ENCODE measurements at regions of chr1 and their contacts with region 1.

Region 1: DNA sequence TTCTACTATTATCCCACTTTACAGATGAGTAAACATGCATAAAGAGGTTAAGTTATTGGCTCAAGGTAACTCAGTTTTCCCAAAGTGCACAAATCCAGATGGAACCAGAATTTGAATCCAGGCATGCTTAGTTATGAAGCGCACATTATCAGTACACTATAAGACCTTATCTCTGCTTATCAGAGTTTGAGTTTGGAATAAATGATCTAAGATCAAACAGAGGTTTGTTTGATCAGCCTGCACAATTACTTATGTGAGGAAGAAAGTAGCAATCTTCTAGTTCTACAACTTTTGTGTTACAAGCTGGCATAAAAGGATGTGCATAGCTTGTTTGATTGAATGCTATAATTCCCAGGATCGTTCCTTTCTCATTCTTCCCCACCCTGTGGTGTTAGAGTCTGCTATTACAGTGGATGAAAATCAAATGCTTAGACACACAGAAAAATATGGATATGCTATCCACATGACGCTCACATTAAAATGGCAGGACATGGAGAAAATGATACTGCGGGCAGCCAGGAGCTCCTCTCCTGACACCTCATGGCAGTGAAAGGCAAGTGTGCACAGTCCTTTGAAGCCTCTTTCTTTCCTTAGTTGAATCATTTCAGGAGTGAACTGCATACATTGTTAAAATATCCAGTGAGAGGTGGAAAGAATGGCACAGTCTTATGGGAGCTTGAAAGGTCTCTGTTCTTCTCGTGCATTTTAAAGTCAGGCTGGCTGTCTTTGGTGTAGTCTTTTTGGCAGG is 23.9 kb upstream of the PBX1 start:
- DNase-seq: peak in 1 of 2 experiments; percentile 7
- H3K4me3 ChIP-seq: no peak overlapping the region
- H3K4me3 Mint-ChIP-seq: no peak overlapping the region
- H3K27ac Mint-ChIP-seq: no peak overlapping the region
- H3K4me1 ChIP-seq: peaks cover 35% of the 10 kb centered on the region
- H3K4me1 Mint-ChIP-seq: peaks cover 14% of the 10 kb centered on the region
- H3K27me3 ChIP-seq: no peaks in the 10 kb centered on the region
- H3K27me3 Mint-ChIP-seq: no peaks in the 10 kb centered on the region
- CTCF ChIP-seq: peak in 1 of 2 experiments; percentile 10

Region 2: GRCh38 chr1:164480285-164480907 is 54.6 kb before region 1 on chr1:
- CTCF ChIA-PET with region 1: no interaction called
- POLR2A ChIA-PET with region 1: no interaction called
- intact Hi-C with region 1: loop called (anchors 5 kb)
- DNase-seq: no peak
- H3K4me3 ChIP-seq: no peak overlapping the region
- H3K4me3 Mint-ChIP-seq: no peak overlapping the region
- H3K27ac Mint-ChIP-seq: no peak overlapping the region
- H3K4me1 ChIP-seq: no peaks in the 10 kb centered on the region
- H3K4me1 Mint-ChIP-seq: no peaks in the 10 kb centered on the region
- H3K27me3 ChIP-seq: no peaks in the 10 kb centered on the region
- H3K27me3 Mint-ChIP-seq: no peaks in the 10 kb centered on the region
- CTCF ChIP-seq: no peak

Region 3: GRCh38 chr1:164518692-164519332 is 16.2 kb before region 1 on chr1:
- CTCF ChIA-PET with region 1: no interaction called
- POLR2A ChIA-PET with region 1: no interaction called
- intact Hi-C with region 1: loop called (anchors 1 kb)
- DNase-seq: peak in 1 of 2 experiments; percentile 13
- H3K4me3 ChIP-seq: no peak overlapping the region
- H3K4me3 Mint-ChIP-seq: no peak overlapping the region
- H3K27ac Mint-ChIP-seq: no peak overlapping the region
- H3K4me1 ChIP-seq: no peaks in the 10 kb centered on the region
- H3K4me1 Mint-ChIP-seq: no peaks in the 10 kb centered on the region
- H3K27me3 ChIP-seq: no peaks in the 10 kb centered on the region
- H3K27me3 Mint-ChIP-seq: no peaks in the 10 kb centered on the region
- CTCF ChIP-seq: peak in 1 of 2 experiments; percentile 21

Region 4: GRCh38 chr1:164558461-164559341 is 23.7 kb after region 1 on chr1 and contains the start of gene PBX1:
- CTCF ChIA-PET with region 1: interaction called, 4 read pairs
- POLR2A ChIA-PET with region 1: no interaction called
- intact Hi-C with region 1: loop called (anchors 2 kb)
- DNase-seq: peak; percentile 97 to 99
- H3K4me3 ChIP-seq: peak within 1 kb of the TSS; percentile 74
- H3K4me3 Mint-ChIP-seq: peak within 1 kb of the TSS; percentile 81
- H3K27ac Mint-ChIP-seq: peak within 1 kb of the TSS; percentile 46
- H3K4me1 ChIP-seq: peaks cover 20% of the 10 kb centered on the region
- H3K4me1 Mint-ChIP-seq: peaks cover 7% of the 10 kb centered on the region
- H3K27me3 ChIP-seq: no peaks in the 10 kb centered on the region
- H3K27me3 Mint-ChIP-seq: no peaks in the 10 kb centered on the region
- CTCF ChIP-seq: no peak
- total RNA-seq, gene PBX1: 101 and 103 TPM in 2 replicates